ENCODE measurements at regions of chr19 and their contacts with region 1.

Region 1: DNA sequence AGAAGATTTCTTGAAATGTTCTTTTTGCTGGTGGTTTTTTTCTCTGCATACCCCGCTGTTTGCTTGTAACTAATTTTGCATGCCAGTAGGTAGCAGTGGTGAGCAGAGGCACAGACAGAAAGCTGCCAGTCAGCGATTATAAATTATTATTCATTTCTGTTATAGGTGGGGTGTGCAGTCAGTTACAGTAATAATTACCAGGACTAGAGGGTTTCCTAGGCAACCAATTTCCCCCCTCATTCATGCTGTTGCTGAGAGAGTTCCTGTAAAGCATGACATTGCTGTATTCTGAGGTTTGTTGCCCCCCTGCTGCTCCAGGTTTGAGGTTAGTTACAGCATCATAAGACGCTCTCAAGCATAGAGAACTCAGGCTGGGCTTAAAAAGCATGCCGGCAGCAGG is 104.5 kb downstream of the URI1 start:
- DNase-seq: peak in 1 of 10 donors; percentile 78

Region 2: GRCh38 chr19:30406220-30407067 is 359.9 kb after region 1 on chr19:
- intact Hi-C with region 1: loop called (anchors 10 kb)
- DNase-seq: peak in 8 of 10 donors; percentile 38 to 95 (median 66)

Region 3: GRCh38 chr19:30669329-30670010 is 622.9 kb after region 1 on chr19:
- intact Hi-C with region 1: loop called (anchors 10 kb)
- DNase-seq: peak; percentile 69 to 96 (median 85)